Mammary epithelial cell (primary cell): ENCODE measurements at regions of chrX and their contacts with region 1.

Region 1: DNA sequence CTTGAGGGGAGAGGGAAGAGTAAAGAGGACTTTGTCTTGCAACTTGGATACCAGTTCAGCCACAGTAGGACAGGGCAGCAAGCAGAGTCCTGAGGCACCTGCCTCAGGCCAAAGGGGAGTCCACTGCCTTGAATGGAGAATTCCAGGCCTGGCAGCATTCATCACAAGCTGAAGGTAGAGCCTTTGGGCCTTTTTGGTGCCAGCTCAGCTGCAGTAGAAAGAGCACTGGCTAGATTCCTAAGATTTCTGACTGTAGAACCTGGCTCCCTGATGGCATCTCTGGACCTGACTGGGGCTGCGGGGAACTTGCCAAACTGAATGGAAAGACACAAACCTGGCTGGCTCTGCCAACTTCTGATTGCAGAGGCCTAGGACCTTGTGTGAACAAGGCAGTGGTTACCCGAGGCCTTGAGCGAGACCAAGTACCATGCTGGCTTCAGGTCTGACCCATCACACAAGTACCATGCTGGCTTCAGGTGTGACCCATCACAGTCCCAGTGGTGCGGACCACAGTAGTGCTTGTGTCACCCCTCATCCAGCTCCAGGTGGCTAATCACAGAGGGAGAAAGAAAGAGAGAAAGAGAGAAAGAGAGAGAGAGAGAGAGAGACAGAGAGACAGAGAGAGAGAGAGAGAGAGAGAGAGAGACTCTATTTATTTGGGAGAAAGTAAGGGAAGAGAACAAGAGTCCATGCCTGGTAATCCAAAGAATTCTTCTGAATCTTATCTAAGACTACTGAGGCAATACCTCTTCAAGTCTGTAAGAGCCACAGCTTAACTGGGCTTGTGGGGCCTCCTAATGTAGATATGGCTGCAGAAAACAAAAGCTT is 137.6 kb upstream of the SPIN4 start:
- DNase-seq: no peak
- H3K4me3 ChIP-seq: no peak overlapping the region
- H3K27ac ChIP-seq: no peak overlapping the region
- H3K4me1 ChIP-seq: no peaks in the 10 kb centered on the region
- H3K27me3 ChIP-seq: no peaks in the 10 kb centered on the region
- CTCF ChIP-seq: no peak

Region 2: DNA sequence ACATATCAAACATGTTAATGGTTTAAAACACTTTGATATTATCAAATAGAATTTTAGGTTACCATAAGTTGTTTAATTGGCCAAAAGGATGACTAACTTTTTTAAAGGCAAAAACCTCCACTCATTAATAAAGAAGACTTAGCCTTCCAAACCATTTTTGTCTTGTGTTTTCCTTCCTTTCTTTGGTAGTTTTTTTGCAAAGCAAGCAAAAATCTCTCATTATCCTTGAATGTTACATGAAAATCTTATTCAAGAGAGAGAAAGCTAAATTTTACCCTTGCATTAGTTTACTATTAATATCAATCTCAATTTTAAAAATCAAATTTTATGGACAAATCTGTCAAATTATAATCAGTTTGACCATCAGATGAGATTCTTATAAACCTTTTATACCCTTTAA is 557.1 kb before region 1 on chrX:
- CTCF ChIA-PET with region 1: no interaction called
- dilution Hi-C with region 1: no loop called
- in situ Hi-C with region 1: no loop called
- intact Hi-C with region 1: no loop called
- DNase-seq: no peak
- H3K4me3 ChIP-seq: no peak overlapping the region
- H3K27ac ChIP-seq: no peak overlapping the region
- H3K4me1 ChIP-seq: no peaks in the 10 kb centered on the region
- H3K27me3 ChIP-seq: no peaks in the 10 kb centered on the region
- CTCF ChIP-seq: no peak

Region 3: GRCh38 chrX:63434665-63435064 is 54.1 kb before region 1 on chrX:
- CTCF ChIA-PET with region 1: no interaction called
- dilution Hi-C with region 1: no loop called
- in situ Hi-C with region 1: no loop called
- intact Hi-C with region 1: loop called (anchors 10 kb)
- DNase-seq: peak; percentile 67
- H3K4me3 ChIP-seq: no peak overlapping the region
- H3K27ac ChIP-seq: no peak overlapping the region
- H3K4me1 ChIP-seq: peaks cover 10% of the 10 kb centered on the region
- H3K27me3 ChIP-seq: no peaks in the 10 kb centered on the region
- CTCF ChIP-seq: no peak